Activated naive CD4-positive, alpha-beta T cell treated with anti-CD3 and anti-CD28 coated beads for 36 hours (primary cell): ENCODE measurements at regions of chr3 and their contacts with region 1.

Region 1: GRCh38 chr3:156483961-156484787 is 70.7 kb downstream of the SSR3 start:
- DNase-seq: peak; percentile 70
- H3K4me3 Mint-ChIP-seq: peak overlapping the region; percentile 51
- H3K27ac Mint-ChIP-seq: peak overlapping the region; percentile 81
- H3K4me1 Mint-ChIP-seq: peaks cover 42% of the 10 kb centered on the region
- H3K27me3 Mint-ChIP-seq: no peaks in the 10 kb centered on the region

Region 2: GRCh38 chr3:156519758-156520162 is 35.6 kb after region 1 on chr3:
- CTCF ChIA-PET with region 1: interaction called, 4 read pairs
- intact Hi-C with region 1: loop called (anchors 1 kb)
- DNase-seq: peak; percentile 34
- H3K4me3 Mint-ChIP-seq: no peak overlapping the region
- H3K27ac Mint-ChIP-seq: no peak overlapping the region
- H3K4me1 Mint-ChIP-seq: peaks cover 17% of the 10 kb centered on the region
- H3K27me3 Mint-ChIP-seq: peaks cover 21% of the 10 kb centered on the region

Region 3: GRCh38 chr3:156554842-156555687 is 70.9 kb after region 1 on chr3 and contains the start of gene SSR3:
- CTCF ChIA-PET with region 1: no interaction called
- intact Hi-C with region 1: loop called (anchors 1 kb)
- DNase-seq: peak; percentile 99
- H3K4me3 Mint-ChIP-seq: peak within 1 kb of the TSS; percentile 90
- H3K27ac Mint-ChIP-seq: peak within 1 kb of the TSS; percentile 86
- H3K4me1 Mint-ChIP-seq: peaks cover 40% of the 10 kb centered on the region
- H3K27me3 Mint-ChIP-seq: no peaks in the 10 kb centered on the region
- total RNA-seq, gene SSR3: 128 to 138 TPM

Region 4: GRCh38 chr3:156605686-156606605 is 121.8 kb after region 1 on chr3:
- CTCF ChIA-PET with region 1: no interaction called
- intact Hi-C with region 1: loop called (anchors 1 kb)
- DNase-seq: no peak
- H3K4me3 Mint-ChIP-seq: peak overlapping the region; percentile 68
- H3K27ac Mint-ChIP-seq: no peak overlapping the region
- H3K4me1 Mint-ChIP-seq: peaks cover 19% of the 10 kb centered on the region
- H3K27me3 Mint-ChIP-seq: peaks cover 31% of the 10 kb centered on the region

Region 5: GRCh38 chr3:156816800-156817645 is 332.8 kb after region 1 on chr3:
- CTCF ChIA-PET with region 1: no interaction called
- intact Hi-C with region 1: loop called (anchors 2 kb)
- DNase-seq: peak; percentile 90
- H3K4me3 Mint-ChIP-seq: peak overlapping the region; percentile 90
- H3K27ac Mint-ChIP-seq: peak overlapping the region; percentile 88
- H3K4me1 Mint-ChIP-seq: peaks cover 22% of the 10 kb centered on the region
- H3K27me3 Mint-ChIP-seq: no peaks in the 10 kb centered on the region